Right ventricle myocardium inferior (tissue), 1 donor: ENCODE measurements at regions of chr2 and their contacts with region 1.

Region 1: DNA sequence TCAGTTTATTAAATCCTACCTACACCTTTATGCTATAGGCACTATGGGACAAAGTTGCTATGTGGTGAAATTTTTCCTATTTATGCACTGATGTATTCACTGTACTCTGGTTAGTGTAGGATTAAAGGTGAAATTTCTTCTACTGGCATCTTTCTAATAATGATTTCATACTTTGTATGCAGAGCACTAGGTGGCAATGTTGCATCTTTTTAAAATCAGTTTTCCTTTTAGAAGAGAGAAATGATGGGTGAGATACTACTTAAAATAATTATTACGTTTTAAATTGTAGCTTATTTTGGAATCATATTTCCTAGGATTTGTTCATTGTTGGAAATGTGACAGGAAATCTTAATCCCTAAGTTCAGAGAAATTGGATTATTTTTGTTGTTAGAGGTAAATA is 150.9 kb downstream of the CD8B2 start:
- DNase-seq: no peak
- ATAC-seq: no peak

Region 2: DNA sequence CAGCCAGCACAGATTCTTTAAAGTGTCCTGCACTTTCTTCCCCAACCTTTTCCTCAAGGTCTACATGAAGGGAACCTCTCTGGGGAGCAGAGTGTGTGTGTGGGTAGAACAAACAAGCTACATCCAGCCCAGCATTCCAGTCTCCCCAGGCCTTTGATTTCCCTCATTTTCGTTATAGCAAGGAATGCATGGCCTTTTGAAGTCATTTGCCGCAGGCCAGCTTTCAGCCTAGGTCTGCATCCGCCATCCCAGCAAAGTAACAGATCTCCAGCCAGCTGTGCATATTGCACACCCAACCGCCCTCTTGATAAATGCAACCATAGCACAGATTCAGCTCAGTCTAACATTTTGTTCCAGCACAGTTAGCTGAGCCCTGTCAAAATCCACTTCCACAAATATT is 106.3 kb before region 1 on chr2:
- intact Hi-C with region 1: no loop called
- DNase-seq: no peak
- ATAC-seq: no peak

Region 3: GRCh38 chr2:106701203-106702022 is 63.4 kb after region 1 on chr2:
- intact Hi-C with region 1: no loop called
- DNase-seq: no peak
- ATAC-seq: no peak

Region 4: DNA sequence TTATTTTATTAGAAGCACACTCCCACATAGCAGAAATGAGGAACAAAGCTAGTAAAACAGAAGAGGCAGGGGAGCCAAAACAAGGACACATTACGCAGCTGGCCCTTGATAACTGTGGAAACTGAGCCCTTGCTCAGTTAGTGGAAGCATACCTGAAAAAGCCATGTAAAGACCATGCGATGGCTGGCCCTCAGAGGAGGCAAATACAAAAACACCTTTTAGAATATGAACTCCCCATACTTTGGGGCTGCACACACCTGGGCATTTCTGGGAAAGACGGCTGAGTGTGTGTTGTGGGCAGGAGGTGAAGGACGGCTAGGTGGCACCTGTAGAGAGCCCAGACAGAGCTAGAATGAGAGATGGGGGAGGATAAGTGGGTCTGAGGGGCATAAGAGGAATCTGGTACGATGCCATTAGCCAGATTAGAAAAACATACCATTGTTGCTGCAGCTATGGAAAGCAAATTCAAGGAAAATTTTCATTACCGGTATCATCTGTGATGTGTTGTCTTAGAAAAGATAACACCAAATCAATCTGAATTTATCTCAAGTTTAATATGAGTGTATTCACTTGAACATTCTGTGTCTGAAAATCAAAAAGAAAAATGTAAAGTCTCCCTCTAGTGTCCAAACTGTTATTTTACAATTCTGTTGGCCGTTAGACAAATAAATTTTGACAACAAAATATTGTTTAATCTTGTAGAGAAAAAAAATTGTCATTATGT is 1556.5 kb after region 1 on chr2:
- intact Hi-C with region 1: loop called (anchors 5 kb)
- DNase-seq: no peak
- ATAC-seq: no peak